Adrenal gland (tissue), 19 donors: ENCODE measurements at regions of chr9 and their contacts with region 1.

Region 1: DNA sequence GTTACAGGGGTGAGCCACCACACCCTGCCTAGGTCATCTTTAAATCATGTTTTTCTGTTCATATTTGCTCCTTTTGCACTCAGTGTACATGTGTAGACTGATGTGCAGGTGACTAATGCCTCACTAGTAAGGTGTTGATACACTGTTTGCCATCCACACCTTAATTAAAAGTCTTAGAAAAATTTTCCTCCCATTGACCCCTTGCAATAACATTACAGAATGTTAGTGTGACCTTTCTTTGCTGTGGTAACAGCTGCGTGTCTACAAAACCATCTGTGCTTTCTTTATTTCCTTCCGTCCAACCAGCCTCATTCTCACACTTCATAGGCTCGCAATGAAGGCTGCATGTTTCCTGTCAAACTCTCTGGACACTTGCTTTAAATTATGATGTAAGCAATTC is 6.6 kb upstream of the CEMIP2 start:
- DNase-seq: no peak
- H3K4me3 ChIP-seq: no peak overlapping the region
- H3K27ac ChIP-seq: no peak overlapping the region
- H3K4me1 ChIP-seq: peaks cover 2 to 3% of the 10 kb centered on the region in 2 donors
- H3K27me3 ChIP-seq: no peaks in the 10 kb centered on the region
- CTCF ChIP-seq: no peak
- POLR2A ChIP-seq: no peak

Region 2: DNA sequence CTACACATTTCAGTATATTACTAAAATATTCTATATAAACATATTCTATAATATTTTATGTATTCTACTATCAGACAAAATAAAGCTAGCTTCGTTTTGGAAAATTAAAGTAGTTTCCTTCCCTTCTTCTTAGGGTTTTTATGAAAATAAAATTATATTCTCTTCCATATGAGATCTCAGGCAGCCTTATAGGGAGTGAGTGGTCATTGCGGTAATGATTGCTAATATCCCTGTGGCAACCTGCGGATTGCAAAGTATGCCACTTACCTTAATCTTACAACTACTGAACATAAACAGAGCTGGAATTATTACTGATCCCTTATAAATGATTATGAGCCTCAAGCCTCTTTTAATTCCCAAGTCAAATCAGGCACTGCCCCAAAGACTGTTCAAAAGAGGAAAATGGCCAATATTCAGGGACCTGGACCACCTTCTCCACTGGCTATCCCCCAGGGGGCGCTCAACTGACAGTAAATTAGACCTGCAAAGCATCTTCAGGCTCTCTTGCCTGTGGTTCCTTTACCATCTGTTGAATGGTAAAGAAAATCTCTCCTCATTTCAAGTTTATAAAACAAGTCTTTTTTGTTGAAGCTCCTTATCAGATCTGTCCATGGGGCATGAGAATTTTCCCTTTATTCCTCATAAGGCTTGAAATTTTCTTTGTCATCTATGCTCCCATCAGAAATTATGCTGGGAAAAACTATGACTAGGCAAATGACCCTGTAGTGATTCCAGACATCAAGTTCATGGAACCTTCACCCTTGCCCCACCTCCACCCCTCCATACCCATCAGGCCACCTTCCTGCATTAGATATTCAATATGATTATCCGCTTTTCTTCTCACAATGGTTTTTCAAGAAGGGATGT is 170.5 kb before region 1 on chr9:
- intact Hi-C with region 1: loop called in 1 of 2 experiments (anchors 5 kb)
- DNase-seq: peak; percentile 70 to 88 (median 83)
- H3K4me3 ChIP-seq: no peak overlapping the region
- H3K27ac ChIP-seq: no peak overlapping the region
- H3K4me1 ChIP-seq: no peaks in the 10 kb centered on the region
- H3K27me3 ChIP-seq: no peaks in the 10 kb centered on the region
- CTCF ChIP-seq: peak; percentile 62 to 84 (median 78)
- POLR2A ChIP-seq: no peak

Region 3: GRCh38 chr9:71683598-71684235 is 91.2 kb before region 1 on chr9:
- intact Hi-C with region 1: no loop called
- DNase-seq: peak in 5 of 7 donors; percentile 16 to 70 (median 29)
- H3K4me3 ChIP-seq: no peak overlapping the region
- H3K27ac ChIP-seq: no peak overlapping the region
- H3K4me1 ChIP-seq: peaks cover 4 to 22% of the 10 kb centered on the region in 2 donors
- H3K27me3 ChIP-seq: no peaks in the 10 kb centered on the region
- CTCF ChIP-seq: peak in 3 of 6 experiments; percentile 20 to 35 (median 31)
- POLR2A ChIP-seq: no peak